B cell (primary cell): ENCODE measurements at regions of chr15 and their contacts with region 1.

Region 1: DNA sequence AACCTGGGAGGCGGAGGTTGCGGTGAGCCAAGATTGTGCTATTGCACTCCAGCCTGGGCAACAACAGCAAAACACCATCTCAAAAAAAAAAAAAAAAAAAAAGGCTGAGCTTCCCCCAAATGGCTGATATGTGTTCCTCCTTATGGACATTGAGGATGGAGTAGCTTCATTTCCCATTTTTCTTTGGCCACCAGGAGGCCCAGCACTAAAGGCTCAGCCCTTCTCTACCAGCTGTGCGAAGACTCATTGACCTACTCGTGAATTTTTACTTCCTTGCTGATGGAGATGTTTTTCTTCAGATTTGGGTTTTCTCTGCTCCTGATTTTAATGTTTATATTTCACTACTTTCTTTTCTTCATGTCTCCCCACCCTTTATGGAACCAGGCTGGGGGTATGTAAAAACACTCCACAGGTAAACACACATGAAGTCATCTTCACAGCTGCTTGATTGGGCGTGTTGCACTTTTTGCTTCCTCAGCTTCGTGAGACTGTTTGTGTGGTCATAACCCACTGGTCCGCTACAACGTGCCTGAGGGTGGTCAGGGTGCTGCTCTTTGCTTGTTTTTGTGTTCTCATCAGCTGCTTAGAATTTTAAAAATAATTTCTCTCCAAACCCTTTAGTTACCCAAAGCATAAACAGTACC is 13.5 kb downstream of the SEMA4B start:
- DNase-seq: peak; percentile 69
- ATAC-seq: peak; percentile 64
- H3K4me3 ChIP-seq: peak overlapping the region in 2 of 5 experiments; percentile 9 to 53
- H3K4me3 Mint-ChIP-seq: peak overlapping the region; percentile 70
- H3K27ac ChIP-seq: peak overlapping the region; percentile 80 to 86
- H3K27ac Mint-ChIP-seq: peak overlapping the region; percentile 90
- H3K4me1 ChIP-seq: peaks cover 99 to 100% of the 10 kb centered on the region in 2 donors
- H3K4me1 Mint-ChIP-seq: peaks cover 94% of the 10 kb centered on the region
- H3K27me3 ChIP-seq: no peaks in the 10 kb centered on the region
- H3K27me3 Mint-ChIP-seq: no peaks in the 10 kb centered on the region
- CTCF ChIP-seq: peak; percentile 28

Region 2: GRCh38 chr15:90114451-90114901 is 100.2 kb before region 1 on chr15:
- CTCF ChIA-PET with region 1: no interaction called
- POLR2A ChIA-PET with region 1: no interaction called
- intact Hi-C with region 1: no loop called
- DNase-seq: no peak
- ATAC-seq: no peak
- H3K4me3 ChIP-seq: no peak overlapping the region
- H3K4me3 Mint-ChIP-seq: no peak overlapping the region
- H3K27ac ChIP-seq: no peak overlapping the region
- H3K27ac Mint-ChIP-seq: no peak overlapping the region
- H3K4me1 ChIP-seq: no peaks in the 10 kb centered on the region
- H3K4me1 Mint-ChIP-seq: no peaks in the 10 kb centered on the region
- H3K27me3 ChIP-seq: no peaks in the 10 kb centered on the region
- H3K27me3 Mint-ChIP-seq: no peaks in the 10 kb centered on the region
- CTCF ChIP-seq: no peak

Region 3: GRCh38 chr15:90154861-90155626 is 59.6 kb before region 1 on chr15:
- CTCF ChIA-PET with region 1: interaction called, 11 read pairs
- POLR2A ChIA-PET with region 1: interaction called, 36 read pairs
- intact Hi-C with region 1: no loop called
- DNase-seq: no peak
- ATAC-seq: no peak
- H3K4me3 ChIP-seq: no peak overlapping the region
- H3K4me3 Mint-ChIP-seq: no peak overlapping the region
- H3K27ac ChIP-seq: no peak overlapping the region
- H3K27ac Mint-ChIP-seq: peak overlapping the region; percentile 10
- H3K4me1 ChIP-seq: peaks cover 7 to 16% of the 10 kb centered on the region in 2 donors
- H3K4me1 Mint-ChIP-seq: peaks cover 18% of the 10 kb centered on the region
- H3K27me3 ChIP-seq: no peaks in the 10 kb centered on the region
- H3K27me3 Mint-ChIP-seq: no peaks in the 10 kb centered on the region
- CTCF ChIP-seq: no peak

Region 4: DNA sequence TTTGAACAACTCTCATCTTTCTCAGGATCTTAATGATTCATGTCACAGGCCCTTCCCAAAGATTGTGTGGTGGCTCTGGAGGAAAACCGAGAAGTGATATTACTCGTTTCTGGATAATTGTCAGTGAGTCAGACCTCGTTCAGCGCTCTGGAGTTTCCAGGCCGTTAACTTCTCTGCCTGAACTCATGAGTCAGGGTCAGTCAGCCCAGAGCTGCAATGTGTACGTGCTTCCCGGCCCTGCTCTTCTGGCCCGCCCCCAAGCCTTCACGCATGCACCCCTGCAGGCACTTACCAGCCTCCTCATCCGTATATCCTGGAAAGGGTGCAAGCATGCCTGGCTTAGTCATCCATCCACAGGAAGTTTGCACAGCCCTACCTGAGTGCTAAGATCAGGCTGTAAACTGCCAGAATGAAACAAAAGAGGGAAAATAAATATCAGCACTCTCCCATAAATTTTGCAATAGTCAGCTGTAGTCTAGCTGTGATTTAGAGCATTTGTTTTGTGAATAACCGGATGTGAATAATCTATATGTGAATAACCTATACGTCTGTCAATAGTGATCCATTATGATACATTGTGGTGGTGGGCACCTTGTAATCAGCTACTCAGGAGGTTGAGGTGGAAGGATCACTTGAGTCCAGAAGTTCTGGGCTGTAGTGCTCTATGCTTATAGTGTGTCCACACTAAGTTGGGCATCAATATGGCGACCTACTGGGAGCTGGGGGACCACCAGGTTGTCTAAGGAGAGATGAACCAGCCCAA is 48.8 kb before region 1 on chr15:
- CTCF ChIA-PET with region 1: interaction called, 3 read pairs
- POLR2A ChIA-PET with region 1: interaction called, 36 read pairs
- intact Hi-C with region 1: loop called (anchors 1 kb)
- DNase-seq: no peak
- ATAC-seq: peak; percentile 53
- H3K4me3 ChIP-seq: no peak overlapping the region
- H3K4me3 Mint-ChIP-seq: peak overlapping the region; percentile 30
- H3K27ac ChIP-seq: no peak overlapping the region
- H3K27ac Mint-ChIP-seq: peak overlapping the region; percentile 59
- H3K4me1 ChIP-seq: peaks cover 22 to 40% of the 10 kb centered on the region in 2 donors
- H3K4me1 Mint-ChIP-seq: peaks cover 56% of the 10 kb centered on the region
- H3K27me3 ChIP-seq: no peaks in the 10 kb centered on the region
- H3K27me3 Mint-ChIP-seq: no peaks in the 10 kb centered on the region
- CTCF ChIP-seq: no peak

Region 5: GRCh38 chr15:90184786-90185569 is 29.7 kb before region 1 on chr15:
- CTCF ChIA-PET with region 1: interaction called, 274 read pairs
- POLR2A ChIA-PET with region 1: interaction called, 163 read pairs
- intact Hi-C with region 1: loop called (anchors 1 kb)
- DNase-seq: peak; percentile 89
- ATAC-seq: peak; percentile 76
- H3K4me3 ChIP-seq: peak overlapping the region; percentile 61 to 79 (median 77)
- H3K4me3 Mint-ChIP-seq: peak overlapping the region; percentile 98
- H3K27ac ChIP-seq: peak overlapping the region; percentile 81 to 88
- H3K27ac Mint-ChIP-seq: peak overlapping the region; percentile 97
- H3K4me1 ChIP-seq: peaks cover 56 to 68% of the 10 kb centered on the region in 2 donors
- H3K4me1 Mint-ChIP-seq: peaks cover 67% of the 10 kb centered on the region
- H3K27me3 ChIP-seq: no peaks in the 10 kb centered on the region
- H3K27me3 Mint-ChIP-seq: no peaks in the 10 kb centered on the region
- CTCF ChIP-seq: no peak

Region 6: GRCh38 chr15:90201130-90201949 is 13.3 kb before region 1 on chr15 and contains the start of gene SEMA4B:
- CTCF ChIA-PET with region 1: interaction called, 274 read pairs
- POLR2A ChIA-PET with region 1: interaction called, 76 read pairs
- intact Hi-C with region 1: loop called (anchors 1 kb)
- DNase-seq: peak; percentile 84
- ATAC-seq: peak; percentile 89
- H3K4me3 ChIP-seq: peak within 1 kb of the TSS; percentile 79 to 94 (median 86)
- H3K4me3 Mint-ChIP-seq: peak within 1 kb of the TSS; percentile 93
- H3K27ac ChIP-seq: peak within 1 kb of the TSS; percentile 52 to 72
- H3K27ac Mint-ChIP-seq: peak within 1 kb of the TSS; percentile 95
- H3K4me1 ChIP-seq: peaks cover 64 to 78% of the 10 kb centered on the region in 2 donors
- H3K4me1 Mint-ChIP-seq: peaks cover 73% of the 10 kb centered on the region
- H3K27me3 ChIP-seq: no peaks in the 10 kb centered on the region
- H3K27me3 Mint-ChIP-seq: no peaks in the 10 kb centered on the region
- CTCF ChIP-seq: no peak
- total RNA-seq, gene SEMA4B: 334 and 336 TPM in 2 replicates